ENCODE measurements at regions of chr9 and their contacts with region 1.

Region 1: DNA sequence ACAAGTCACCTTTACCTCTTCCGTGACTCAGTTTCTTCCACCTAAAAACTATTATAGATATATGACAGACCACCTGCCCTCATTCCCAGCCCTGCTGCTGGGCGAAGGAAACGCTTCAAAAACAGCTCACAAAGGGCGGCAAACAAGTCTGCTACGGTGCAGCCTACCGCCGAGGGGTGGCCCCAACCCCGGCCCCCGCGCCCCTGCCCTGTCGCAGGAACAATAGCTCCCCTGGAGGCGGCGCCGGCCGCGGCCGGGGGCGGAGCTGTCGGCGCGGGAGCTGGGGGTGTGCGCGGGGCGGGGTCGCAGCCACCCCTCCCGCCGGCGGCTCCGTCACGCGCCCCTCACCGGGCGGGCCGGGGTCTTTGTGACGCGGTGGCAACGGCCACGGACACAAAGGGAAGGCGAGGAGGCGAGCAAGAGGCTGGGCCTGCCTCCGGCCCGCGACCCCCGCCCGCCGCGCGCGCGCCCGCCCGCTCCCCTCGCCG is at the start of gene TMEFF1:
- DNase-seq: peak; percentile 42 to 67
- ATAC-seq: peak; percentile 55 to 82 (median 78)
- H3K4me3 ChIP-seq: peak within 1 kb of the TSS; percentile 83
- H3K27ac ChIP-seq: no peak within 1 kb of the TSS
- H3K4me1 ChIP-seq: peaks cover 19% of the 10 kb centered on the region
- H3K27me3 ChIP-seq: peaks cover 0 to 4% (median 0%) of the 10 kb centered on the region in 3 donors
- CTCF ChIP-seq: no peak
- total RNA-seq, gene TMEFF1: 0.29 to 0.56 (median 0.30) TPM in 3 of 4 donors, not detected in the other

Region 2: GRCh38 chr9:100426530-100427428 is 46.1 kb before region 1 on chr9 and contains the start of gene MSANTD3:
- intact Hi-C with region 1: loop called in 1 of 2 experiments (anchors 5 kb)
- DNase-seq: peak; percentile 69 to 81
- ATAC-seq: peak; percentile 77 to 90 (median 84)
- H3K4me3 ChIP-seq: peak within 1 kb of the TSS; percentile 92
- H3K27ac ChIP-seq: peak within 1 kb of the TSS; percentile 91
- H3K4me1 ChIP-seq: peaks cover 35% of the 10 kb centered on the region
- H3K27me3 ChIP-seq: no peaks in the 10 kb centered on the region
- CTCF ChIP-seq: peak; percentile 32
- total RNA-seq, gene MSANTD3: 15.2 to 59.4 (median 32.6) TPM